HEK293T (cell line): ENCODE measurements at regions of chr4 and their contacts with region 1.

Region 1: GRCh38 chr4:184250795-184251669 is 33.4 kb upstream of the ENPP6 start:
- DNase-seq: peak; percentile 36

Region 2: DNA sequence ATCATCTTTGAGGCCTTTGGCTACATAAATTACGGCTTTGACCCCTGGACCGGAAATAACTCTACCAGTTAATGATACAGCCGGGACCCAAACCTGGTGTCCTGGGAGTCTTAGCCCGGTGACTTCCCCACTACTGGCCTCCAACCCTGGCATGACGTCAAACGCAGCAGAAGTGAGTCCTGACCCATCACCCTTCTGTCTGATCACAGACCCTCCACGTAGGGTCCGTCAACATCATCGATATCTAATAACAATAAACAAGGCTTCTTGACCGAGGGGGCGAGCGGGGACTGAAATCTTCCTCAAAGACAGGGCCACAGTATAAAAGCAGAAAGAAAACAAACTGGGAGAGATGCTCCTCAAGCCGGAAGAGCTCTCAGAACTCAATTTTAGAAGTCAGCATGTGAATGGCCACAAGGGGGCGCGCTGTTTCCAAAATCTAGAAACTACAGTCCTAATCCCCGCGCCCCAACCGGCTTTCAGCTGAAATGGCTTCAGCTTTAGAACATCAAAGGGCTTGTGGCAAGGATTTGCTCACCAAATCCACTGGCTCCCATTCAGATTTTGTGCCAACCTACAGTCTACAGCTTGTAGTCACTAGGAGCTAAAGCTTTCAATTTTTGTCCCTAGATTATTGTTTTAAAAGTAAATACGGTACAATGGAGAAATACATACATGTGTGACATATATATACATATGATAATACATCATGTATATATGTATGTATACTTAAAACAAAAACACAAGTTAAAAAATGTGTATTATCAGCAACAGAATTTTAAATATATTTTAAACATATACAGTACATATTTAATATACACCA is 13.1 kb after region 1 on chr4:
- CTCF ChIA-PET with region 1: interaction called, 17 read pairs
- POLR2A ChIA-PET with region 1: no interaction called
- DNase-seq: peak; percentile 63

Region 3: DNA sequence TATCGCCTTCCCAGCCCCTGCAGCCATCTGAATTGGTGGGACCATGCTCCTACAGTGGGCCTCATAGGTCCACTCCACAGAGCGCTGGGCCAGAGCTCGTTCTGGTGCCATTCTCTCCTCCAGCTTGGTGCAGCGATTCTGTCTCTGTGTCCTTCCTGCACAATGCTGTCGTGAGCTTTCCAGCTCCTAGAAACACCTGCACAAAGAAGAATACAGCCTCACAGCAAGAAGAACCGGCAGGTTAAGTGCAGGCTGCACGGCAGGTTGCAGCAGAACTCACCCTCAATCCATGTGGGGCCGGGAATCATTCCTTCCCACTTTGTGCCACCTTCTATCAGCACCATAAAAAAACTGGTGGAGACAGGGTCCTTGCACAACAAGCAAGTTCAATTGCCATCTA is 67.8 kb after region 1 on chr4:
- CTCF ChIA-PET with region 1: interaction called, 16 read pairs
- POLR2A ChIA-PET with region 1: no interaction called
- DNase-seq: no peak